ENCODE measurements at regions of chr2 and their contacts with region 1.

Region 1: GRCh38 chr2:63875131-63875527 is 33.4 kb downstream of the UGP2 start:
- DNase-seq: peak; percentile 35
- H3K4me3 Mint-ChIP-seq: peak overlapping the region; percentile 57
- H3K27ac Mint-ChIP-seq: peak overlapping the region; percentile 98
- H3K4me1 Mint-ChIP-seq: peaks cover 52% of the 10 kb centered on the region
- H3K27me3 Mint-ChIP-seq: no peaks in the 10 kb centered on the region
- CTCF ChIP-seq: no peak

Region 2: DNA sequence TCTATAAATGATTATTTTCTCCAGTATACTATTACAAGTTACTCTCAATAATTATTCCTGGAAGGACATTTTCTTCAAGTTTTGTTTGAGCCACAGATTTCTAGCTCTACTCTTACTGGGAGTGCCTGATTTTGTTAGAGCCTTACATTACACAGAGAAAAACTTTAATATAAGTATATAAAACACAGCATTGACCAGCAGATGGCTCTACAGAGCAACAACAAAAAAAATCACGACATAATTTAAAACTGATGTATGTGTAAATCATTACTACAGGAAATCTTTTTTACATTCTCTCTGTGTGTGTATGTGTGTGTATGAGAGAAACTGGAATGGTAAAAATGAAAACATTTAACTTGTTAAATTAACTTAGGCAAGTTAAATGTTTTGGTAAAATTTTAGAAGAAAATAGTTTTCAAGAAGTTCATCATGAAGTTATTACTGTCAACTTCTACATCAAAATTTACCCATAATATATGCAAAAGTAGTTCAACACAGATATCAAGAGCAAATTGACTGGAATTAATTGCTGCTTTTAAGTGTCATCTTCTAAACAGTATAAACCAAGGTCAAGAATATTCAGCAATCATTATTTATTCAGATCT is 183.0 kb before region 1 on chr2:
- CTCF ChIA-PET with region 1: interaction called, 16 read pairs
- POLR2A ChIA-PET with region 1: no interaction called
- intact Hi-C with region 1: no loop called
- DNase-seq: peak; percentile 48
- H3K4me3 Mint-ChIP-seq: no peak overlapping the region
- H3K27ac Mint-ChIP-seq: no peak overlapping the region
- H3K4me1 Mint-ChIP-seq: peaks cover 5% of the 10 kb centered on the region
- H3K27me3 Mint-ChIP-seq: no peaks in the 10 kb centered on the region
- CTCF ChIP-seq: peak; percentile 63

Region 3: DNA sequence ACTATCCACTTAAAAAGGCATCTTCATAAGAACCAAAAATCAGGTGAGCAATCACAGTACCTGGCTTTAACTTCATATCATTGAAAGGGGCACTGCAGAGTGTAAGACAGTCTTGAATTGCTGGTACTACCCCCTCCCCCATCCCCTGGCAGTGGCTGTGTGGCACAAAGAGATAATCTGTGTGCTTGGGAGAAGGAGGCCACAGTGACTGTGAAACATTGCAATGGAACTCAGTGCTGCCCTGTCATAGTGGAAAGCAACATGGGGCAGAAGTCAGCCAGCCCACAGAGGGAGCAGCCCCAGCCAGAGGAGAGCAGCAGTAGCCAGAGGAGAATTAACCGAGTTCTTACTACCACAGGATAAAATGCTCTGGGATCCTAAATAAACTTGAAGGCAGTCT is 78.8 kb before region 1 on chr2:
- CTCF ChIA-PET with region 1: no interaction called
- POLR2A ChIA-PET with region 1: no interaction called
- intact Hi-C with region 1: no loop called
- DNase-seq: no peak
- H3K4me3 Mint-ChIP-seq: no peak overlapping the region
- H3K27ac Mint-ChIP-seq: no peak overlapping the region
- H3K4me1 Mint-ChIP-seq: peaks cover 11% of the 10 kb centered on the region
- H3K27me3 Mint-ChIP-seq: no peaks in the 10 kb centered on the region
- CTCF ChIP-seq: no peak

Region 4: GRCh38 chr2:63849381-63850203 is 25.5 kb before region 1 on chr2:
- CTCF ChIA-PET with region 1: interaction called, 4 read pairs
- POLR2A ChIA-PET with region 1: interaction called, 248 read pairs
- intact Hi-C with region 1: no loop called
- DNase-seq: no peak
- H3K4me3 Mint-ChIP-seq: no peak overlapping the region
- H3K27ac Mint-ChIP-seq: peak overlapping the region; percentile 91
- H3K4me1 Mint-ChIP-seq: peaks cover 55% of the 10 kb centered on the region
- H3K27me3 Mint-ChIP-seq: no peaks in the 10 kb centered on the region
- CTCF ChIP-seq: no peak

Region 5: GRCh38 chr2:63888490-63889402 is 13.6 kb after region 1 on chr2:
- CTCF ChIA-PET with region 1: interaction called, 3 read pairs
- POLR2A ChIA-PET with region 1: interaction called, 11 read pairs
- intact Hi-C with region 1: no loop called
- DNase-seq: peak; percentile 67
- H3K4me3 Mint-ChIP-seq: no peak overlapping the region
- H3K27ac Mint-ChIP-seq: peak overlapping the region; percentile 17
- H3K4me1 Mint-ChIP-seq: peaks cover 5% of the 10 kb centered on the region
- H3K27me3 Mint-ChIP-seq: no peaks in the 10 kb centered on the region
- CTCF ChIP-seq: peak; percentile 71